ENCODE measurements at regions of chr7 and their contacts with region 1.

Region 1: GRCh38 chr7:100081535-100082102 is at the start of gene ZNF3:
- DNase-seq: peak; percentile 99
- H3K4me3 ChIP-seq: peak within 1 kb of the TSS; percentile 85 to 96 (median 89)
- H3K27ac ChIP-seq: peak within 1 kb of the TSS; percentile 88 to 89 (median 89)
- H3K4me1 ChIP-seq: peaks cover 0 to 55% (median 48%) of the 10 kb centered on the region in 4 donors
- H3K27me3 ChIP-seq: no peaks in the 10 kb centered on the region
- CTCF ChIP-seq: peak; percentile 80 to 93 (median 91)
- EP300 ChIP-seq: peak in 2 of 4 donors; percentile 46 to 62
- POLR2A ChIP-seq: peak; percentile 57 to 70
- total RNA-seq, gene ZNF3: 17.9 to 28.0 (median 22.6) TPM

Region 2: DNA sequence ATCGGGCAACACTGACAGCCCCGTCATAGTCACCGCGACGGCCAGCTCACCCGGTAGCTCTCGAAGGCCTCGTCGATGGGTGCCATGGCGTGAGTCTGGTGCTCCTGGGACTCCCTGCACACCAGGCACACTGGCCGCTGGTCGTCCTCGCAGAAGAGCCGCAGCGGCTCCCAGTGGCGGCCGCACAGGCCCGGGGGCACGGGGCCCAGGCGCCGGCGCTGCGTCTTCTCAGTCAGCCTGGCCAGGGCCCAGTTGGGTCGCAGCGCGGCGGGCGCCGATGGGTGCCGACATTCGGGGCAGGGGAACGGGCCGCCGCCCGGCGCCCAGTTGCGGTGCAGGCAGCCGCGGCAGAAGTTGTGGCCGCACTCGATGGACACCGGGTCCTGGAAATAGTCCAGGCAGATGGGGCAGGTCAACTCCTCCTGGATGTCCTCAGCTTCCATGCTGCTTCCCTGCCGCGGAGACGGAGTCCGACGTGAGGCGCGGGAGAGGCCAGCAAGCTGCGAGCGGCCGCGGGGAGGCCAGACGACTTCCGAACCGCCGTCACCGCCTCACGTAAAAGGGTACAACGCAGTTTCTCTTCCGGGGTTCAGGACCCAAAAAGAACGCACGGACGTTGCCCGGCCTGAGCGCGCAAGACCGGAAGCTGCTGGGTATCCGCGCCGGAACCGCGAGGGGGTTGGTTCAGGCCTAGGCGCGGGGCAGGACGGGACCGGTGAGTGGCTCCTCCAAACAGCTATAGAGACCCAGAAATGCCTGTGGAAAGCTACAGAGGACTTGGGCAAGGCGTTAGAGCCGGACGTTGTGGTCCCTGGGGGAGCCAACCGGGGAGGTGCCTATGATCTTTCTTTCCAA is 162.4 kb before region 1 on chr7 and contains the start of gene TRIM4:
- intact Hi-C with region 1: loop called (anchors 10 kb)
- DNase-seq: peak; percentile 97
- H3K4me3 ChIP-seq: peak within 1 kb of the TSS; percentile 89 to 99 (median 94)
- H3K27ac ChIP-seq: peak within 1 kb of the TSS; percentile 97 to 99 (median 98)
- H3K4me1 ChIP-seq: peaks cover 0 to 44% (median 41%) of the 10 kb centered on the region in 4 donors
- H3K27me3 ChIP-seq: no peaks in the 10 kb centered on the region
- CTCF ChIP-seq: peak in 2 of 4 experiments; percentile 6 to 23
- EP300 ChIP-seq: peak in 1 of 4 donors; percentile 50
- POLR2A ChIP-seq: peak; percentile 86
- total RNA-seq, gene TRIM4: 21.9 to 33.2 (median 29.6) TPM

Region 3: DNA sequence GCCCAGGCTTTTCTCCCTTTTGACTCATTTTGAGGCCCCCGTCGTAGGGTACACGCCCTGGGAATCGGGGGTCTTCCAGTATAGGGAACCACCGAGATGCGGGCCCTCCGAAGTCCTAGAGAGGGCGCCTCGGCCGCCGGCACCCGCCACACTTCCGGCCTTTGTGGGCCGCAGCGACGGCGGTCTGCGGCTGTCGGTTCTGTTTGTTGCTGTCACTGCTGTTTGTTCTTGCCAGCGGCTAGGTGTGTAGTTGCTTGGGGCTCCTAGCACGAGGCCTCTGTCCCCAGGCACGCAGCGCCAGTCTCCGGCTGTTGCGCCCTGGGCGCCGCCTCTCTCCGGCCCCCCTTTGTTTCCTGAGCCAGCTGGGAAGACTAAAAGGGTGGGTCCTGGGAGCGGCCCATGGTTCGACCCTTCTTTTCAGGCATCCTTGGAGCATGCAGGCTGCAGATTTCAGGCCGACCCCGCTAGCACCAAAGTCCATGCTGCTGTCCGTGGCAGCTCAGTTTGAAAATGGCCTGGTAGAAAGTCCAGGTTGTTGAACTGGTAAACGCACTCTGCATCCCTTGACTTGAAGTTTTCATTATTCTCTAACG is 84.0 kb before region 1 on chr7:
- intact Hi-C with region 1: loop called (anchors 2 kb)
- DNase-seq: peak; percentile 78
- H3K4me3 ChIP-seq: peak overlapping the region; percentile 43 to 56 (median 50)
- H3K27ac ChIP-seq: peak overlapping the region; percentile 63 to 80 (median 72)
- H3K4me1 ChIP-seq: peaks cover 0 to 20% (median 6%) of the 10 kb centered on the region in 4 donors
- H3K27me3 ChIP-seq: no peaks in the 10 kb centered on the region
- CTCF ChIP-seq: peak in 3 of 4 experiments; percentile 32 to 53 (median 47)
- EP300 ChIP-seq: no peak
- POLR2A ChIP-seq: peak; percentile 36 to 37

Region 4: DNA sequence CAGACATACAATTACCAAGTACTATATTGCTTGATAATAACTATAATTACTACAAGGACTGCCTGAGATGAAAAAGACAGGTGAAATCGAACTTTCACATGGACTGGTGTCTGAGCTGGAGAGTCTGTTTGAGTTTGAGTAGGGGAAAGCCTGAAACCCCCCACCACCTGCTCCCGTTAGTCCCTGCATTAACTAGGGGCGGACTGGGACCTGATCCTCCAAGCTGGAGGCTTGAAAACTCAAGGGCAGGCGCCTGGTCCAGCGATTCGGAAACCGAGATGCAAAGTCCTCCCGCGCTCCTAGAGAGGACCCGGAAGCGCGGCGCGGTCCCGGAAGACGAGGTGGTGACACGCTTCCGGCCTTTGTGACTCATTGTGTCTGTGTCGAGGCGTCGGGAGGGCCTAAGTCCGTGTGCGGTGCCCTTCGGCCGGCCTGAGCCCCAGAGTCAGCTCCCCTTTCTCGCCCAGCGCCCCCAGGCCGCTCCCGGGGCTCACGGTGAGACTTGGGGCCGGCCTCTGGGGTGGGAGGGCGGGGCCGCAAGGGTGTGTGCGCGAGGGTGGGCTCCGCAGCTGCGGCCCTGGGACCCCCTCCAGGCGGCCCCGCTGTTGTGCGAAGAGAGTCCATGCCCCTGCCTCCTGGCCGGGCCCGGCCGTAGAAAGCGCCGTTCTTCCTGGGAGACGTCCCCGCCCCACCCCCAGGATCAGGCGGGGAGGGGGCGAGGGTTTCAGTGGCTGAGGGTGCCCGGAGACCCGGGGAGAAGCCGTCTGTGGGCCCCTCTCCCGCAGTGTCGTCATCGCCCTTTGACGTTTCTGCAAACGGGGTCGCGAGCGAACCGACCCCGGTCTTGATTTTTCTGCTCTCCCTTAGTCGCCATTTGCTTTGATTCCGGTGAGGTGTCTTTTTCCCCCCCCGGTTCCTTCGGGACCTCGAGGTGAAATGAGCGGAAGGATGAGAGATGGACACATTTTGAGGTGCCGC is 66.1 kb before region 1 on chr7 and contains the start of gene ZKSCAN1:
- intact Hi-C with region 1: loop called (anchors 2 kb)
- DNase-seq: peak; percentile 95
- H3K4me3 ChIP-seq: peak within 1 kb of the TSS; percentile 79 to 100 (median 100)
- H3K27ac ChIP-seq: peak within 1 kb of the TSS; percentile 98 to 100 (median 100)
- H3K4me1 ChIP-seq: peaks cover 0 to 50% (median 40%) of the 10 kb centered on the region in 4 donors
- H3K27me3 ChIP-seq: no peaks in the 10 kb centered on the region
- CTCF ChIP-seq: no peak
- EP300 ChIP-seq: no peak
- POLR2A ChIP-seq: peak; percentile 69 to 78
- total RNA-seq, gene ZKSCAN1: 27.8 to 32.7 (median 31.6) TPM

Region 5: GRCh38 chr7:100049441-100050311 is 31.9 kb before region 1 on chr7 and contains the start of gene ZSCAN21:
- intact Hi-C with region 1: loop called (anchors 1 kb)
- DNase-seq: peak; percentile 93
- H3K4me3 ChIP-seq: peak within 1 kb of the TSS; percentile 65 to 94 (median 90)
- H3K27ac ChIP-seq: peak within 1 kb of the TSS; percentile 90 to 98 (median 98)
- H3K4me1 ChIP-seq: peaks cover 0 to 32% (median 20%) of the 10 kb centered on the region in 4 donors
- H3K27me3 ChIP-seq: no peaks in the 10 kb centered on the region
- CTCF ChIP-seq: no peak
- EP300 ChIP-seq: peak in 2 of 4 donors; percentile 28 to 35
- POLR2A ChIP-seq: peak; percentile 80 to 85
- total RNA-seq, gene ZSCAN21: 14.7 to 21.8 (median 17.4) TPM

Region 6: DNA sequence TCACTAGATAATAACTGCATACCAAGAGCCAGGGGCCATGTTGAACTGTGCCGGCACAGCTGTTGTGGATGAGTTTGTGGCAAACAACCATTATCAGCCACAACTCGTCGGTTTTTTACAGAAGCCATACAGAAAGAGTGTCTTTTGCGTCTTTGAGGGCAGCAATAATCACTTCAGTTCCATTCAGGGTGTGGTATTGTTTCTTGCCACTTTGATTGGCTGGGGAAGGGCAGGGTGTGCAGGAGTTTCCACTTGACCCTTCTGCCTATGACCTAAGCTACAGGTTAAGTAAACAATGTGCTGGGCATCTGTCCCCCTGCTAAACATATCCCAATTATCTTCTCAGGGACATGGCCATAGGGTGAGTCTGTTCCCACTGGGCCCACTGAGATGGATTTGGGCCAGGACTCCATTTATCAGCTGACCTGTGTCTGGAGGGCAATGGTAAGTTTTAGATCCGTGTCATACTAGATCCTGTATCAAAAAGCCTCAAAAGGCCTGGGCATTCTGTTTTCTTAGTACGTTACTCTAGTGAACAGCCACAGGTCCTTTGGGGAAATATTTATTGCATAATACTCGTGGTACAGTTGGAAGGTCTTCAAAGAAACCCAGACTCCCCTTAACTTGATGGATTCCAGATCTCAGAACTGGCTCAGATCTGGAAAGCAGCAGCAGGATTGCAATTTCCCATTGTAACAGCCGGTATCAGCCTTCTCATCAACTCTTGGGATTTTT is 16.0 kb before region 1 on chr7:
- intact Hi-C with region 1: loop called (anchors 2 kb)
- DNase-seq: peak; percentile 75
- H3K4me3 ChIP-seq: no peak overlapping the region
- H3K27ac ChIP-seq: peak overlapping the region; percentile 50 to 87 (median 84)
- H3K4me1 ChIP-seq: peaks cover 0 to 24% (median 17%) of the 10 kb centered on the region in 4 donors
- H3K27me3 ChIP-seq: no peaks in the 10 kb centered on the region
- CTCF ChIP-seq: no peak
- EP300 ChIP-seq: peak; percentile 41 to 92 (median 78)
- POLR2A ChIP-seq: no peak

Region 7: GRCh38 chr7:100132697-100133151 is 51.1 kb after region 1 on chr7:
- intact Hi-C with region 1: no loop called
- DNase-seq: no peak
- H3K4me3 ChIP-seq: no peak overlapping the region
- H3K27ac ChIP-seq: no peak overlapping the region
- H3K4me1 ChIP-seq: peaks cover 0 to 22% (median 11%) of the 10 kb centered on the region in 4 donors
- H3K27me3 ChIP-seq: no peaks in the 10 kb centered on the region
- CTCF ChIP-seq: peak; percentile 85 to 89 (median 86)
- EP300 ChIP-seq: no peak
- POLR2A ChIP-seq: no peak

Region 8: DNA sequence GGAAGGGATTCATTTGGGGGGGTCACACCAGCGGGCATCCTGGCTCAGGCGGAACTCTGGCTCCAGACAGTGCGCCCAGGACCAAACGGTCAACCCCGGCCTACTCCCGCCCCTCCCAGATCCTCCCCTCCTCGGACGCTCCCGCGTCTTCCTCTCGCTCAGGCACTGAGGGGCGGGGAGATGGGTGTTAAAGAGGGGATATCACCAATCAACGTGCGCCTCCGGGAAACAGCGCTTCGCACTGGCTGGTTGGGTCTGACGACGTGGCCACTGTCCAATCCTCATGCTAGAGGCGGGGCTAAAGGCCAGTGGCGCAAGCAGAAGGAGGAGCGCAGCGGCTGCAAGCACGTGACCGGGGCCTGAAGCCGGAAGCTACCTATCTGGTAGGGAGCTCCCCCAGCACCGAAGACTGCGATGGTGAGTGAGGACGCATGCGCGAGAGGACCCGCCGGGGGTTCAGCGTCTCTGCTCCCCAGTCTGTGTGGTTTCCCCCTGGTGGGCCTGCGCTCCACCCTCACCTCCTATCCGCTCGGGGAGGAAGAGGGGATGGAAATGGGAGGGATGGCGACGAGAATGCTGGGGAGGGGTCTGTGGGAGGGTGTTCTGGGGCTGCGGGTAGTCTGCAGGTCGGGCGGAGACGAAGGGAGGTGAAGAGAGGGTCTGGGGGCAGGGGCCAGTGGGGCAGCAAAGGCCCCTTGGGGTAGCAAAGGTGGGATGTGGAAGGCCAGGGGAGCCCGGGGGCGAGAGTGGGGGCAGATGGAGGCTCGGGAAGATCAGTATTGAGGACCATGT is 67.1 kb after region 1 on chr7 and contains the start of gene LAMTOR4:
- intact Hi-C with region 1: no loop called
- DNase-seq: peak; percentile 100
- H3K4me3 ChIP-seq: peak within 1 kb of the TSS; percentile 79 to 96 (median 88)
- H3K27ac ChIP-seq: peak within 1 kb of the TSS; percentile 87 to 92 (median 88)
- H3K4me1 ChIP-seq: peaks cover 0 to 18% (median 16%) of the 10 kb centered on the region in 4 donors
- H3K27me3 ChIP-seq: no peaks in the 10 kb centered on the region
- CTCF ChIP-seq: no peak
- EP300 ChIP-seq: no peak
- POLR2A ChIP-seq: peak; percentile 31 to 71
- total RNA-seq, gene LAMTOR4: 222 to 309 (median 264) TPM